ENCODE measurements at regions of chr11 and their contacts with region 1.

Region 1: DNA sequence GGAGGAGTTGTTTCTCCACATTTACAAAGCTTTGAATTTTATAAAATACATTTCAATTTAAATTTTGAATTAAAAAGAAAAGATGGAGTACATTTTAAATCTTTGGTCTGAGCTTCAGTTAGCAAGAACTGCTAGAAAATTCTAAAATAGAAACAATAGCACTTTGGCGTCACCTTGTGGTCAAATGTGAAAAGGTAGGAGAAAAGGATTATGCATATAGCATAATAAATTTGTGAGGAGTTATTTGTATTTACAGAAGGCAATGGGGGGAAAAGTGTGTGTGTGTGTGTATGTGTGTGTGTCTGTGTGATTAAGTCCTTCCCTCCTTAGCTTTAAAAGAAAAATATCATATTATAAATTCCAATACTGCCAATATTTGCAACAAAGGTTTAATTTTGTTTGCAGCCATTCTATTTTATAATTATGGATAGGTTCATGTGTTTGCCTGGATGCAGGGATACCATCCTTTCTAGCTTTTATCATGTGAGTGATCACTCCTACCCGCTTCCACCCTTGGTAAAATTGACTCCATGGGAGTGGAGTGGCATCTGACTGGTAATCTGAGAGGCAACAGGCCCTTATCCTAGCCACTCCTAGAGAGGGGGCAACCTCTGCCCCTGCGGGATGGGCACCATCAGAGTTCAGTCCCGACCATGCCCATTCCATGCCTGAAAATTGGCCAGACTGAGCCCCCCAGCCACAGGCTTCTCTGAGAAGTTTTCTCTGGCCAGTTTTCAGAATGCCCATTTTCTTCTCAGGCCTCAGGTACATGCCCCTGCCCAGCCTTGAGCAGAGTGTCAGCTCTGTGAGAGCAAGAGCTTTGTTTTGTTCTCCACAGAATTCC is 13.6 kb upstream of the LGR4 start:
- DNase-seq: no peak
- ATAC-seq: peak; percentile 76
- H3K4me3 ChIP-seq: no peak overlapping the region
- H3K27ac ChIP-seq: no peak overlapping the region; the same call in 1 of the 2 replicates
- H3K4me1 ChIP-seq: peaks cover 2% of the 10 kb centered on the region; the same call in 1 of the 2 replicates
- H3K27me3 ChIP-seq: no peaks in the 10 kb centered on the region
- CTCF ChIP-seq: peak; percentile 90; the same call in 1 of the 2 replicates

Region 2: GRCh38 chr11:26753723-26754504 is 732.2 kb before region 1 on chr11:
- CTCF ChIA-PET with region 1: no interaction called
- POLR2A ChIA-PET with region 1: no interaction called
- in situ Hi-C with region 1: no loop called
- intact Hi-C with region 1: loop called (anchors 5 kb)
- DNase-seq: peak; percentile 13
- ATAC-seq: peak; percentile 85
- H3K4me3 ChIP-seq: no peak overlapping the region
- H3K27ac ChIP-seq: no peak overlapping the region
- H3K4me1 ChIP-seq: no peaks in the 10 kb centered on the region
- H3K27me3 ChIP-seq: no peaks in the 10 kb centered on the region
- CTCF ChIP-seq: peak; percentile 71

Region 3: GRCh38 chr11:27296497-27296896 is 189.7 kb before region 1 on chr11:
- CTCF ChIA-PET with region 1: interaction called, 4 read pairs
- POLR2A ChIA-PET with region 1: no interaction called
- in situ Hi-C with region 1: no loop called
- intact Hi-C with region 1: loop called (anchors 5 kb)
- DNase-seq: peak; percentile 41
- ATAC-seq: peak; percentile 90
- H3K4me3 ChIP-seq: no peak overlapping the region
- H3K27ac ChIP-seq: peak overlapping the region; percentile 83
- H3K4me1 ChIP-seq: peaks cover 14% of the 10 kb centered on the region; the same call in 1 of the 2 replicates
- H3K27me3 ChIP-seq: no peaks in the 10 kb centered on the region
- CTCF ChIP-seq: peak; percentile 80

Measured in Panc1 (cell line).